ENCODE measurements at regions of chr1 and their contacts with region 1.

Region 1: GRCh38 chr1:89605692-89606091 is 27.2 kb upstream of the LRRC8C start:
- DNase-seq: no peak
- H3K4me3 Mint-ChIP-seq: no peak overlapping the region
- H3K27ac Mint-ChIP-seq: peak overlapping the region; percentile 99
- H3K4me1 Mint-ChIP-seq: peaks cover 92% of the 10 kb centered on the region
- H3K27me3 Mint-ChIP-seq: no peaks in the 10 kb centered on the region

Region 2: GRCh38 chr1:89524369-89525168 is 81.1 kb before region 1 on chr1 and contains the start of gene LRRC8B:
- CTCF ChIA-PET with region 1: interaction called, 3 read pairs
- POLR2A ChIA-PET with region 1: interaction called, 69 read pairs
- DNase-seq: peak; percentile 92
- H3K4me3 Mint-ChIP-seq: no peak within 1 kb of the TSS
- H3K27ac Mint-ChIP-seq: peak within 1 kb of the TSS; percentile 93
- H3K4me1 Mint-ChIP-seq: peaks cover 27% of the 10 kb centered on the region
- H3K27me3 Mint-ChIP-seq: no peaks in the 10 kb centered on the region
- total RNA-seq, gene LRRC8B: 21.3 to 21.7 TPM

Region 3: DNA sequence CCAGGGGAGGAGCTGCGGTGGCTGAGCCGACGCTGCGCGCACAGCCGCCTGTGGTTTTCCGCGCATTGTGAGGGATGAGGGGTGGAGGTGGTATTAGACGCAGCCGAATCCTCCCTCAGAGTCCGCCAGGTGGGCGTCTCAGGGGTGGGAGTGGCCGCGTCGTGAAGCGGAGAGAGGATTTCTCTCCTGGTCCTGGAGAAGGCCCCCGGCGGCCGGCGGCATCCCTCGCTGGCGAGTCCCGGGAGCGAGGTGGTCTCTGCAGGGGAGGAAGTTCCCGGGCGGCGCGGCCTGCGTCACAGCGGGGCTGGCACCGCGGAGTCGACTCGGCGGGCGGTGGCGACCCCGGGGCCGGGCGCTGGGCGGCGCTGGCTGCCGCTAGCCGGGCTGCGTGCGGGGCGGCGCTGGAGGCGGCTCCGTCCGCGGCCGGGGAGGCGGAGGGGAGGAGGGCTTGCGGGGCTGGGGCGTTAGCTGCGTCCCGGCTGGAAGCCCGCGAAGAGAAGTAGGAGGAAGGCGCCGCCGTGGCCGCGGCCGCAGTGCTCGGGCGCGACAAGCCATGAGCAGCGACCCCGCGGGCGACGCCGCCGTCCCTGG is 27.1 kb after region 1 on chr1 and contains the start of gene LRRC8C:
- CTCF ChIA-PET with region 1: interaction called, 102 read pairs
- POLR2A ChIA-PET with region 1: interaction called, 828 read pairs
- DNase-seq: peak; percentile 90
- H3K4me3 Mint-ChIP-seq: peak within 1 kb of the TSS; percentile 88
- H3K27ac Mint-ChIP-seq: peak within 1 kb of the TSS; percentile 89
- H3K4me1 Mint-ChIP-seq: peaks cover 71% of the 10 kb centered on the region
- H3K27me3 Mint-ChIP-seq: no peaks in the 10 kb centered on the region
- total RNA-seq, gene LRRC8C: 52.5 to 55.6 TPM

Region 4: GRCh38 chr1:89719502-89720306 is 114.0 kb after region 1 on chr1:
- CTCF ChIA-PET with region 1: interaction called, 19 read pairs
- POLR2A ChIA-PET with region 1: interaction called, 84 read pairs
- DNase-seq: no peak
- H3K4me3 Mint-ChIP-seq: peak overlapping the region; percentile 61
- H3K27ac Mint-ChIP-seq: peak overlapping the region; percentile 97
- H3K4me1 Mint-ChIP-seq: peaks cover 88% of the 10 kb centered on the region
- H3K27me3 Mint-ChIP-seq: no peaks in the 10 kb centered on the region

Region 5: GRCh38 chr1:89762779-89763648 is 157.3 kb after region 1 on chr1:
- CTCF ChIA-PET with region 1: interaction called, 62 read pairs
- POLR2A ChIA-PET with region 1: interaction called, 73 read pairs
- DNase-seq: peak; percentile 88
- H3K4me3 Mint-ChIP-seq: peak overlapping the region; percentile 78
- H3K27ac Mint-ChIP-seq: peak overlapping the region; percentile 75
- H3K4me1 Mint-ChIP-seq: peaks cover 59% of the 10 kb centered on the region
- H3K27me3 Mint-ChIP-seq: peaks cover 1% of the 10 kb centered on the region